ENCODE measurements at regions of chr16 and their contacts with region 1.

Region 1: DNA sequence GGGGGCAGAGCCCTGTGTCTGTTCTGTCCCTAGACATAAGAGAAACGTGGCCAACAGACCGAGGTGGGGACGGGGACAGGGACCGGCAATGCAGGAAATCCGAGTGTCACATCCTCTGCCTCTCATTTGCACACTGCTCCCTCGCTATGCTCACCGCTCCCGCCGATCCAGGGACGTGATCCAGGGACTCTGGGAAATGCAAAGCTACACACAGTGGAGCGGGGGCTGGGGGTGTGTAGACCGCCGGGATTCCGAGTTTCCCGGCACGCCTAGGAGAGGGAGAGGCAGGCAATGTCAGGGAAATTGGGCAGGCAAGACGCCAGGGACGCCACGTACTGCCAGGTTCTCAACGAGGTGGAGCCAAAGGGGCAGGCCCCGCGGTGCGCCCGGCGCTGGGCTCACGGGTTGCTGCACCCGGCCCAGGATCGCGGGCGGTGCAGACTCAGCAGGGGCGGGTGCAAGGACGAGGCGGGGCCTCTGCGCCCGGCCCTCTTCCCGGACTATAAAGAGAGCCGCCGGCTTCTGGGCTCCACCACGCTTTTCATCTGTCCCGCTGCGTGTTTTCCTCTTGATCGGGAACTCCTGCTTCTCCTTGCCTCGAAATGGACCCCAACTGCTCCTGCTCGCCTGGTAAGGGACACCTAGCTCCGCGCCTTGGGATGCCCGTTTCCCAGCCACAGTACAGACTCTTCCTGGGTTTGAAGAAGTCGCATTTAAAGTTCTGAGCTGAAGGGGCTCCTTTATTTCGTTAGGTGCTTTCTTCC is at the start of gene MT1X:
- DNase-seq: peak; percentile 96
- ATAC-seq: peak; percentile 97 to 99
- total RNA-seq, gene MT1X: 104 to 336 TPM

Region 2: DNA sequence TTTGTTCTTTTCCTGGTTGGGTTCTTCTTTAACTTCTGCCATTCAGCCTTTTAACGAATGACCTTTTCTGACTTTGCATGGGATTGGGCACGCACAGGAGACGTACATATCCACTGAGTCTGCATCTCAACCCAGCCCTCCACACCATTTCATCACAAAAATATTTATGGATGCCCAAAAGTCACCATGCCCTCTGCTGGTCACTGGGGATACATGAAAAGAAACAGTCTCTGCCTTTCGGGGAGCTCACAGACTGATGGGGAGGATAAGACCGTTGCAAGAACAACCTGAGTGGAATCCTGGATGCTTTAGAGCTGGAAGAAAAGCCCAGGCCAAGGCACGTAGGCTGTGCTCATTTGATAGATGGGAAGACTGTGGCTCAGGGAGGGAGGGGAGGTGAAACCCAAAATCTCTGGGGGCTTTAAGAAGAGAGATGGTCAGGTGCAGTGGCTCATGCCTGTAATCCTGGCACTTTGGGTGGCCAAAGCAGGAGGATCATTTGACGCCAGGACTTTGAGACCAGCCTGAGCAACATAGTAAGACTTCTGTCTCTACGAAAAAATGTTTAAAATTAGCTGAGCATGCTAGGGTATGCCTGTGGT is 81.6 kb before region 1 on chr16:
- intact Hi-C with region 1: loop called in 1 of 2 experiments (anchors 5 kb)
- DNase-seq: no peak
- ATAC-seq: peak; percentile 14 to 65

Region 3: DNA sequence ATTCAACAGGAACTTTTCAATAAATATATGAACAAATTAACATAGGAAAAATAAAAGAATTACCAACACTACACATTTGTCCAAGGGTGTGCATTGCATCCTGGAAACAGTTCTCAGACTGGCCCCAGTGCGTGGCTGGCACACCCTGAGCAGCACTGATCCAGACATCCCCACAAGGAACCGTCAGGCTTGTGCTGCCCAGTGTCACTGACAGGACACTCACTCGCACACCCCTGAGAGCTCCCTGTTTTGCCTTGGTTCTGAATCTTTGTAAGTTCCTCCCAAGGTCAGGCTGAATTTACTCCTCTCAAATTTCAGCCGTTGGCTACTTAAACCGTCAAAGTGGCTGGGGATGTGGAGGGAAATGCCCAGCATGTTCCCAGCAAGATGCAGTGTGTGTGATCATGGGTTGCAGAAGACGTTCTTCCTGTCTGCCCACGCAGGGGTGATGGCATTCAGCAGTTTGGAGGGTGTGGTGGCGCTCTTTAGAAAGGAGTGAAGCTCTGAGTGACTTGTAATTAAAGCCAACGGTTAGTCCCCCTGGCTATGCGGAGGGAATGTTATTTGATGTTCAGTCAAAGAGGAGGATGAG is 72.0 kb before region 1 on chr16:
- intact Hi-C with region 1: loop called in 1 of 2 experiments (anchors 2 kb)
- DNase-seq: peak; percentile 72
- ATAC-seq: peak; percentile 3 to 9

Region 4: GRCh38 chr16:56643080-56643778 is 38.9 kb before region 1 on chr16:
- intact Hi-C with region 1: no loop called
- DNase-seq: peak; percentile 87
- ATAC-seq: peak; percentile 93 to 97